Activated CD8-positive, alpha-beta T cell treated with anti-CD3 and anti-CD28 coated beads for 36 hours (primary cell): ENCODE measurements at regions of chr13 and their contacts with region 1.

Region 1: GRCh38 chr13:106536244-106537034 is 977 bp upstream of the EFNB2 start:
- DNase-seq: peak; percentile 88
- ATAC-seq: peak; percentile 40
- H3K4me3 Mint-ChIP-seq: peak overlapping the region; percentile 81
- H3K27ac Mint-ChIP-seq: no peak overlapping the region
- H3K4me1 Mint-ChIP-seq: peaks cover 15% of the 10 kb centered on the region
- H3K27me3 Mint-ChIP-seq: peaks cover 26% of the 10 kb centered on the region
- CTCF ChIP-seq: peak; percentile 91

Region 2: GRCh38 chr13:106083620-106084350 is 452.7 kb before region 1 on chr13:
- CTCF ChIA-PET with region 1: no interaction called
- POLR2A ChIA-PET with region 1: no interaction called
- intact Hi-C with region 1: loop called (anchors 5 kb)
- DNase-seq: peak; percentile 41
- ATAC-seq: no peak
- H3K4me3 Mint-ChIP-seq: no peak overlapping the region
- H3K27ac Mint-ChIP-seq: no peak overlapping the region
- H3K4me1 Mint-ChIP-seq: no peaks in the 10 kb centered on the region
- H3K27me3 Mint-ChIP-seq: no peaks in the 10 kb centered on the region
- CTCF ChIP-seq: peak; percentile 35

Region 3: DNA sequence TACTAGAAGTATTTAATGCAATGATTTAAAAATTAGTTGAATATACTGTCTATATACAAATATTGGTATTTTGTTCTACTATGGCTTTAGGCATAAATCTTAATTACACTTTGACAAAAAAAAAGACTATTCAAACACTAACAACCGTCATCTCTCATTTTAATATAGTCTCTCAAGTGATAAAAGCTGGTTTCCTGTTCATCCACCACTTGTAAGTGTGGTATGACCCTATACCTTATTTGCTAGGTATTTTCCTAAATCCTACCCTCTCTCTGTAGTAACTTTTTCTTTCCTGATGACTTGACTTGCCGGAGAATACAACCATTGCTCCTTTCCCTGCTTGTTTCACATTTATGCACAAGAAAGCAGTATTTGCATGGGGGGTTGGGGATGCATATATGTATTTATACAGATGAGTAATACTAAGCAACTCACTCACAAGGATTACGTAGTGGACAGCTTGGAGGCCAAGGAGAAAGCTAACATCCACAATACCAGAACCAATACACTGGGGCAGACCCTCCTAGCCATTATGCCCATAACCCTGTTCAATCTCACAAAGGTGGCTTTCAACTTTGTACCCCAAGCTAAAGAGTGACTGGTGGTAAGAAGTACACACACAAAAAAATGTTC is 11.7 kb after region 1 on chr13:
- CTCF ChIA-PET with region 1: interaction called, 13 read pairs
- POLR2A ChIA-PET with region 1: interaction called, 3 read pairs
- intact Hi-C with region 1: no loop called
- DNase-seq: no peak
- ATAC-seq: no peak
- H3K4me3 Mint-ChIP-seq: no peak overlapping the region
- H3K27ac Mint-ChIP-seq: peak overlapping the region; percentile 7
- H3K4me1 Mint-ChIP-seq: peaks cover 32% of the 10 kb centered on the region
- H3K27me3 Mint-ChIP-seq: no peaks in the 10 kb centered on the region
- CTCF ChIP-seq: no peak

Region 4: GRCh38 chr13:106567474-106568298 is 31.2 kb after region 1 on chr13 and contains the start of gene ARGLU1:
- CTCF ChIA-PET with region 1: interaction called, 28 read pairs
- POLR2A ChIA-PET with region 1: interaction called, 5 read pairs
- intact Hi-C with region 1: no loop called
- DNase-seq: peak; percentile 93
- ATAC-seq: peak; percentile 86
- H3K4me3 Mint-ChIP-seq: peak within 1 kb of the TSS; percentile 100
- H3K27ac Mint-ChIP-seq: peak within 1 kb of the TSS; percentile 94
- H3K4me1 Mint-ChIP-seq: peaks cover 49% of the 10 kb centered on the region
- H3K27me3 Mint-ChIP-seq: no peaks in the 10 kb centered on the region
- CTCF ChIP-seq: no peak
- total RNA-seq, gene ARGLU1: 89.2 to 91.8 TPM

Region 5: GRCh38 chr13:106619688-106620555 is 83.5 kb after region 1 on chr13:
- CTCF ChIA-PET with region 1: interaction called, 16 read pairs
- POLR2A ChIA-PET with region 1: interaction called, 3 read pairs
- intact Hi-C with region 1: no loop called
- DNase-seq: peak; percentile 35
- ATAC-seq: peak; percentile 86
- H3K4me3 Mint-ChIP-seq: no peak overlapping the region
- H3K27ac Mint-ChIP-seq: no peak overlapping the region
- H3K4me1 Mint-ChIP-seq: peaks cover 2% of the 10 kb centered on the region
- H3K27me3 Mint-ChIP-seq: peaks cover 13% of the 10 kb centered on the region
- CTCF ChIP-seq: peak; percentile 71